PC-3 (cell line): ENCODE measurements at regions of chr10 and their contacts with region 1.

Region 1: DNA sequence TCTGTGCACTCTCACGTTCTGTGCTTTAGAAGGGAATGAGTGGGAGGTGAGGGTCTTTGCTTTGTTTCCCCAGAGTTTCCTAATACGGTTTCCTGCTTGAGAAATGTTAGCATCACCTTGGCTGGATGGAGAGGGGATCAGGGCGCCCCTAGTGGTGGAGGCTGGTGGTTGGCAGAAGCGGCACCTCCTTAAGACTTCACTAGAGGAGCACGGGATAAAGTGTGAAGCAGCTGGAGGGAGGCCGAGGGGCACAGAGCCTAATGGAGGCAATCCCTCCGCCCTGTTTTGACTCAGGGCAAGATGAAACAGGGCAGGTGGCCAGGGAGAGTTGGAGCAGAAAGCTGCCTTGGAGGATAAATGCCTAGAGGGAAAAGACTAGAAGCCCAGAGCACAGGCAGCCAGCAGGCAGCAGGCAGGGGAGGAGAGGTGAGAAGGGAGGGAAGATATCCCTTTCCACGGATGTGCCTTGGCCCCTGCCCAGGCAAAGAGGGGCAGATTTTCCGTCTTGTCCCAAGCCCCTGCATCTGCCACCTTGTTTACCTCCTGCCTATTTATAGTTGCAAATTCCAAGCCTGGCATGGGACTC is 56.0 kb upstream of the BTRC start:
- DNase-seq: peak; percentile 57
- ATAC-seq: peak; percentile 73
- H3K4me3 ChIP-seq: no peak overlapping the region
- H3K27ac ChIP-seq: no peak overlapping the region
- H3K4me1 ChIP-seq: no peaks in the 10 kb centered on the region
- H3K27me3 ChIP-seq: no peaks in the 10 kb centered on the region
- CTCF ChIP-seq: peak; percentile 77

Region 2: GRCh38 chr10:101258179-101258885 is 39.7 kb before region 1 on chr10:
- CTCF ChIA-PET with region 1: no interaction called
- POLR2A ChIA-PET with region 1: no interaction called
- intact Hi-C with region 1: loop called (anchors 2 kb)
- DNase-seq: peak; percentile 32
- ATAC-seq: no peak
- H3K4me3 ChIP-seq: no peak overlapping the region
- H3K27ac ChIP-seq: no peak overlapping the region
- H3K4me1 ChIP-seq: no peaks in the 10 kb centered on the region
- H3K27me3 ChIP-seq: no peaks in the 10 kb centered on the region
- CTCF ChIP-seq: no peak

Region 3: GRCh38 chr10:101397140-101397539 is 99.1 kb after region 1 on chr10:
- CTCF ChIA-PET with region 1: interaction called, 5 read pairs
- POLR2A ChIA-PET with region 1: interaction called, 28 read pairs
- intact Hi-C with region 1: no loop called
- DNase-seq: no peak
- ATAC-seq: no peak
- H3K4me3 ChIP-seq: no peak overlapping the region
- H3K27ac ChIP-seq: no peak overlapping the region
- H3K4me1 ChIP-seq: 0 out of 2 replicates have a peak, but pooled peaks cover 3% of the 10 kb centered on the region
- H3K27me3 ChIP-seq: no peaks in the 10 kb centered on the region
- CTCF ChIP-seq: no peak

Region 4: DNA sequence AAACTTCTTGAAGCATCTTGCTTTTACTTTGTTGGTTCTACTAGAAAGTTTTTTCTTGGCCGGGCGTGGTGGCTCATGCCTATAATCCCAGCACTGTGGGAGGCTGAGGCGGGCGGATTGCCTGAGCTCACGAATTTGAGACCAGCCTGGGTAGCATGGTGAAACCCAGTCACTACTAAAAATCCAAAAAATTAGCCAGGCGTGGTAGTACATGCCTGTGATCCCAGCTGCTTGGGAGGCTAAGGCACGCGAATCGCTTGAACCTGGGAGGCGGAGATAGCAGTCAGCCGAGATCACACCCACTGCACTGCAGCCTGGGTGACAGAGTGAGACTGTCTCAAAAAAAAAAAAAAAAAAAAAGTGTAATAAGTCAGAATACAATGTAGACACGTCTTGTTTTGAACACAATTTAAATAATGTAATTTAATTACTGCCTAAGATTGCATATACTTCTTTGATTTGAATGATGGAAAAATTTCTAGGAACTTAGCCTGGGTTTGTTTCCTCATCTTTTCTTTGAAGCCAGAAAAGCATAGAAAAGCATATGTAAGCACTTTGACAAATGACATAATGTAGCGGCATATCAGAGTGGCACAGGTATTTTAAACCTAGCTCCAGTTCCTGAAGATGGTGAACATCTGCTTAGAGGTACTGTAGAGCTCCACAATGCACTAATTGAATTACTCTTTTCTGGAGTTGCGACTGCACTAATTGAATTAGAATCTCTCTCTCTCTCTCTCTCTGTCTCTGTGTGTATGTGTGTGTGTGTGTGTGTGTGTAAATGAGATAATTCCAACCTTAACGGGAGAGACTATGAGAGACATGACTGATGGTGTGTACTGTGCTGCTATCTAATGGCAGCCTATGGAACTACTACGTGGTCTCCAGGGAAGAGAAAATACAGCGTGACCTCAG is 143.8 kb after region 1 on chr10:
- CTCF ChIA-PET with region 1: interaction called, 21 read pairs
- POLR2A ChIA-PET with region 1: no interaction called
- intact Hi-C with region 1: loop called (anchors 1 kb)
- DNase-seq: peak; percentile 63
- ATAC-seq: peak; percentile 86
- H3K4me3 ChIP-seq: no peak overlapping the region
- H3K27ac ChIP-seq: no peak overlapping the region
- H3K4me1 ChIP-seq: no peaks in the 10 kb centered on the region
- H3K27me3 ChIP-seq: no peaks in the 10 kb centered on the region
- CTCF ChIP-seq: peak; percentile 67

Region 5: DNA sequence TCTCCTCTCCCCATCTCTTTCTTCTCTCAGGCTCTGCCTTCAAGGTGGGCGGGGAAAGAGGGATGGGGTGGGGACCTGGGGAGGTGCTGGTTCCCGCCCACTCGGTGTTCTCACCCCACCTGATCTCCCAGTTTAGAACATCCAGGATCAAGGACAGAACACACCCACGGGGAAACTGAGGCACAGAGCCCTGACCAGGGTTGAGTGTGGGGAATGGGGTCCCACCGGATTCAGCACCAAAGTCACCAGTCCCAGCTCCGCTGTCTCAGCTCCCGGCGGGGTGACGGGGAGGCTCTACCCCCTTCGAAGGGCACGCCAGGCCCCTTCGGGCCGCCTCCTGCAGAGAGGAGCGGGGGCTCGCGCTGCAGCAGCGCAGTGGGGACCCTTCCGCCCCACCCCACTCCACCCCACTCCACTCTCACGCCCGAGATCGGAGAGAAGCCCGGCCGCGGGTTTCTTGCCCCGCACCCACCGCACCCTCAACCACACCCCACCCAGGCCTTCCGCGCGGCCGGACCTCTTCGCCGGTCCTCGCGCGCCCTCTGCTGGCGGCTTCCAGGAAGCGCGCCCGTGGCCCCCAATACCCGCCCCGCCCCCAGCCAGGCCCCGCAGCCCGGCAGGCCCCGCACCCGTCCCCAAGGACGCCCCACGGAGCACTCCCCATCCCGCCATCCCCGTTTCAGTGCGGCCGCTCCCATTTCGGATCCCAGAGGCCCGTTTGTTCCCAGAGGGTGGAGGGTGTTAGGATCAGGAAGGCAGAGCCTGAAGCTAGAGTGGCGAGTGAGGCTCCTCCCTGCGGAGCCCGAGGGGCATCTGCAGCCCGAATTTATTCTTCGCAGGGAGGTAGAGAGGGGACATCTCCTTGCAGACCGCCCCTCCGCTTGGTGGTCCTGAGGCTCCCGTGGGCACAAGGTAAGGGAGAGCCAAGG is 272.1 kb after region 1 on chr10:
- CTCF ChIA-PET with region 1: interaction called, 4 read pairs
- POLR2A ChIA-PET with region 1: no interaction called
- intact Hi-C with region 1: loop called (anchors 10 kb)
- DNase-seq: peak; percentile 59
- ATAC-seq: peak; percentile 66
- H3K4me3 ChIP-seq: peak overlapping the region; percentile 82
- H3K27ac ChIP-seq: no peak overlapping the region
- H3K4me1 ChIP-seq: peaks cover 11% of the 10 kb centered on the region; the same call in 1 of the 2 replicates
- H3K27me3 ChIP-seq: no peaks in the 10 kb centered on the region
- CTCF ChIP-seq: peak; percentile 57